PC-3 (cell line): ENCODE measurements at regions of chr6 and their contacts with region 1.

Region 1: GRCh38 chr6:42864602-42865001 is 14.8 kb upstream of the RPL7L1 start:
- DNase-seq: no peak
- ATAC-seq: no peak
- H3K4me3 ChIP-seq: no peak overlapping the region
- H3K27ac ChIP-seq: no peak overlapping the region
- H3K4me1 ChIP-seq: no peaks in the 10 kb centered on the region
- H3K27me3 ChIP-seq: no peaks in the 10 kb centered on the region
- CTCF ChIP-seq: no peak

Region 2: DNA sequence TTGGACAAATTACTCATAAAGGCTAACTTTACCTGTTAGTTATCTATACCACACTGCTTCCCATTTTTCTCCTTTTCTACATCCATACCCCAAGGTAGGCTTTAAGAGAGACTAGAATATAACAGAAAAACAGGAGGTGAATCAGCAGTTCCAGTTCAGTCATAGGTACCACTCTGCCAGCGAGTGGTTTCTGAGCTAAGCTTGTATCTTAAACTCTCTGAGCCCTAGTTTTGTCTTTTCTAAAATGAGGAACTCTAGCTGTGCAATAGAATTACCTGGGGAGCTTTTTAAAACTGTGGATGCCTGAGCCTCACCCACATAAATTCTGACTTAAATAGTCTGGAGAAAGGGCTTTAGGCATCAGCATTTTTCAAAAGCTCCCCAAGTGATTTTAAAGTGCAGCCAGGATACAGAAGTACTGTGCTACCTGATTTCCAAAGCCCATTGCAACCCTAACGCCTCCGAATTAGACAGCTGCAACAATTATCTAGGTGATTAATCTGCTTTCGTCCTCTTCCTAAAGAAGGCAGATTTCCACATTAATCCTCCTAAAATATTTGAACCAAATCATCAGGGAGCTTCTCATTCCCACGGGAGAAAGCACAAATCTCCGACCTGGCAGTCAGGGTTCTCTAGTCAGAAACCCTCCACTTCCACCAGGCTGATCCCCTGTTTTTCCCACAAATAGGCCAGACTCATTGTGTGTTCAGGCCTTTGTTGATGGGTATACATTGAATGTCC is 22.6 kb before region 1 on chr6:
- CTCF ChIA-PET with region 1: no interaction called
- POLR2A ChIA-PET with region 1: interaction called, 11 read pairs
- intact Hi-C with region 1: no loop called
- DNase-seq: no peak
- ATAC-seq: no peak
- H3K4me3 ChIP-seq: no peak overlapping the region
- H3K27ac ChIP-seq: no peak overlapping the region
- H3K4me1 ChIP-seq: no peaks in the 10 kb centered on the region
- H3K27me3 ChIP-seq: no peaks in the 10 kb centered on the region
- CTCF ChIP-seq: no peak